Psoas muscle (tissue), 8 donors: ENCODE measurements at regions of chr17 and their contacts with region 1.

Region 1: DNA sequence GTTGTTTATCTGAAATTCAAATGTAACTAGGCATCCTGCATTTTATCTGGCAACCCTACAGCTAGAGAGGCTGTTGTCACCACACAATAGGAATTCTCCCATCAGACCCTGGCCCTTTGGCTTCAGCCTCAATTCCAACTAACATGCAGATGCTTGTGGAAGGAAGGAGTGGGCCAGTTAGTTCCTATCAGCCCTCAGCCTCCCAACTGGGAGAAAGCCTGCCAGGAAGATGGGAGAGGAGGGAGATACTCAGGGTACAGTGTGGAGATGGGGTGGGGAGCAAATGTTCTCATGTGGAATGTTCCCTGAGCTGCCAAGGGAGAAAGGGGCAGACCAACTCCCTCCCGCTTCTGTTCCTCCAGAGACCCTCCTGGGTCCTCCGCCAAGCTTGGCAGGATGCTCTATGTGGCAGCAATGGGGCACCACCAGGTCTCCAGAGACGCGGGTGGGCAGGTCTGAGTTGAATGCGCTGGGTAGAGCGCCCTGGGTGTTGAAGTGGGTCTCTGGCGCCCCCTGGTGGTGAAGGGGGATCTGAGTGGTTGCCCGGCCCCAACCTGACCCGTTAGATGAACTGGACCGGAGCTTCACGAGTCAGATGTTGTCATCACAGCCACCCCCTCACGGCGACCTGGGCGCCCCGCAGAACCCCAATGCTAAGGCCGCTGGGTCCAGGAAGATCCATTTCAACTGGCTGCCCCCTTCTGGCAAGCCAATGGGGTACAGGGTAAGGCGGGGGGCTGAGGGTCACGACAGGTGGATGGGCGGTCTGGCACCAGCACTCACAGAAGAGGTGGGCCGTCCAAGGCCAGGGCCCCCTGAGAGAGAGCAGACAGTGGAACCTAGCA is 15.2 kb downstream of the GALK1 start:
- DNase-seq: peak; percentile 90 to 95
- ATAC-seq: peak; percentile 74 to 84 (median 76)
- H3K4me3 ChIP-seq: no peak overlapping the region
- H3K27ac ChIP-seq: no peak overlapping the region
- H3K4me1 ChIP-seq: peaks cover 13% of the 10 kb centered on the region
- H3K27me3 ChIP-seq: no peaks in the 10 kb centered on the region
- CTCF ChIP-seq: peak; percentile 97

Region 2: DNA sequence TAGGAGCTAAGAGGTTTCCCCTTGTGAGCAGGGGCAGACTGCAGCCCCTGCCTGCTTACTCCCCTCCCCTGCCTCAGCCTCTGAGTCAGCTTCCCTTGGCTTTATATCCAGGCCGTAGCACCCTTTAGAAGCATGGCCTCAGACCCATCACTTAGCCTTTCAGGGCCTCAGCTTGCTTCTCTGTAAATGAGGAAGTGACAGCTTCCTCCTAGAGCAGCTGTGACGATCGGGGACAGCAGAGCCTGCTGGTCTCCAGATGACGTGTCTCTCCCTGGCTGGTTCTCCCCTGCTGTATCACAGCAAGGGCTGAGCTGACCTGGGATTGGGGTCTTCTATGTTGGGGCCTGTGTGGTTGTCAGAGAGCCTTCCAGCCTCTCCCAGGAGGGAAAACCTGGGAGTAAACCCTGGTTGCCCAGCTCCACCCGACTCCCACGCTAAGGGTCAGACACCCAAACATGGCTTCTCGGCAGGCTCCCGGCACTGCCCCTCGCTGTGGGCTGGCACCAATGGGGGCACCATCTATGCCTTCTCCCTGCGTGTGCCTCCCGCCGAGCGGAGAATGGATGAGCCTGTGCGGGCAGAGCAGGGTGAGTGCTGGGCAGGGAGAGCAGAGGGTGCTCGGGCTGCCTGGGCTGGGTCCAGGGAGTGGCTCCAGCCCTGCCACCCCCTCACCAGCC is 178.4 kb before region 1 on chr17:
- intact Hi-C with region 1: no loop called
- DNase-seq: no peak
- ATAC-seq: peak in 3 of 4 donors; percentile 23 to 57 (median 40)
- H3K4me3 ChIP-seq: no peak overlapping the region
- H3K27ac ChIP-seq: no peak overlapping the region
- H3K4me1 ChIP-seq: no peaks in the 10 kb centered on the region
- H3K27me3 ChIP-seq: no peaks in the 10 kb centered on the region
- CTCF ChIP-seq: no peak

Region 3: DNA sequence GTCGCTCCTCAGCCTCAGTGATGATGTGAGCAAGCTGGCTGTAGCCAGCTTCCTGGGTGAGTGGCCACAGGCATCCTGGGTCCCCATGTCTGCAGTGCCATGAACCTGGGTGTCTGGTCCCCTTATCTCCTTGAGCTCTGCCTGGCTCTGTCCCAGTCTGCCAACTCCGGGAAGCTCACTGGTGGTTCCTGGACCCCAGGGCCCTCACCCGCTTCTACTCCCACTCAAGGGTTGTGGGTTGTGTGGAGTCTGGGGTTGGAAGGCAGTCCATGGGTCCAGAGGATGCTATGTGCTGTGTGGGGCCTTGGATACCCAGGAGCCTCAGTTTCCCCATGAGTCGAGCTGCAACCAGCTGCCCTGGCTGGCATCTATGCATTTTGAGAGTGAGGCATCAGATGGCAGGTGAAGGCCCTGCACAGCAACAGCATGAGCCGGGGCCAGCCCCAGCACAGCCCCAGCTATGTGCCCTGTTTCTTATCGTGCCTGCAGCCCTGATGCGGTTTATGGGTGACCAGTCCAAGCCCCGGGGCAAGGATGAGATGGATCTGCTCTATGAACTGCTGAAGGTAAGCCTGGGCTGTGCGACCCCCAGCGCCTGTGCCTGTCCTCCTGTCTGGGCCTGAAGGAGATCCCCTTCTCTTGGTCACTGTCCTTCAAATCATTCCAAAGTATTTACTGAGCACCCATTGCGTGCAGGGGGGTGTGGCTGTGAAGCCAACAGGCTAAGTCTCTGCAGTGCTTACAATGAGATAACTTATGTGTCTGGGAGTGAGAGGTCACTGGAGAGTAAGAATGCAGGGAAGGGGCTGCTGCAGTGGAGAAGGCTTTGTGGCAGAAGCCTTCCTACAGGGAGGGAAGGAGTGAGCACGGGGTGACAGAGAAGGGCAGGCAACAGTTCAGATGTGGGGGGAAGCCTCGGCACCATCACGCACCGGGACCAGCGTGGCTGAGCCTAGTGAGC is 128.0 kb before region 1 on chr17:
- intact Hi-C with region 1: no loop called
- DNase-seq: peak in 1 of 2 donors; percentile 11
- ATAC-seq: no peak
- H3K4me3 ChIP-seq: no peak overlapping the region
- H3K27ac ChIP-seq: no peak overlapping the region
- H3K4me1 ChIP-seq: peaks cover 7% of the 10 kb centered on the region
- H3K27me3 ChIP-seq: no peaks in the 10 kb centered on the region
- CTCF ChIP-seq: no peak

Region 4: DNA sequence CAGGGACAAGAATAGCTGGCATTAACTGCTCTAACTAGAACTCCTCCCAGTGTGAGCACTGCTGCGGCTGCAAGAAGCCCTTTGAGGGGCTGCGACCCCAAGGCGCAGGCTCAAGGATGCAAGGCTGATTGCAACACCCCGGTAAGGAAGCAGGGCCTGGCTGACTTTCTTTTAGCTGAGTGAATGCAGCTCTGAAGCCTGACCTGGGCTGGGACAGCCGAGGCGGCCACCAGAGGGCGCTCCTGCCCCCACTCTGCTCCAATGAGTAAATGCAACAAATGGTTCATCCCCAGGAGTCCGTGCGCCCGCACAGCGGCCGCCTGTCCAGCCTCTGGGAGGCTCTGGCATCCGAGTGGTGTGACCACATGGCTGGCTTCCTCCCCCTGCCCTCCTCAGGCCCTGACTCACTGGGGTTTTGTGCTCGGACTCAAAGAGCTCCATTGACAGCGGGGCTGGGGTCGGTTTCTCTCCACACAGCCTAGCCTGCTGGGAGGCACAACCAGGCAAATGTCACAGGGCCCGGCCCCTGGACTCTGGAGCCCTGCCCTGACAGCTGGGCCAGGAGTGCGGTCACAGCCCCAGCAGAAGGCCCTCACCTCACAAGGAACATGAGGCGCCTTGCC is 116.8 kb before region 1 on chr17 and contains the start of gene SMIM5:
- intact Hi-C with region 1: loop called (anchors 1 to 2 kb)
- DNase-seq: peak; percentile 90 to 95
- ATAC-seq: peak; percentile 75 to 88 (median 78)
- H3K4me3 ChIP-seq: peak within 1 kb of the TSS; percentile 33
- H3K27ac ChIP-seq: peak within 1 kb of the TSS; percentile 78
- H3K4me1 ChIP-seq: peaks cover 46% of the 10 kb centered on the region
- H3K27me3 ChIP-seq: no peaks in the 10 kb centered on the region
- CTCF ChIP-seq: peak; percentile 97
- total RNA-seq, gene SMIM5: 0.11 to 0.28 (median 0.17) TPM in 3 of 4 donors, not detected in the other

Region 5: GRCh38 chr17:75673487-75673886 is 76.3 kb before region 1 on chr17:
- intact Hi-C with region 1: loop called (anchors 2 to 5 kb)
- DNase-seq: no peak
- ATAC-seq: no peak
- H3K4me3 ChIP-seq: no peak overlapping the region
- H3K27ac ChIP-seq: no peak overlapping the region
- H3K4me1 ChIP-seq: peaks cover 19% of the 10 kb centered on the region
- H3K27me3 ChIP-seq: no peaks in the 10 kb centered on the region
- CTCF ChIP-seq: no peak

Region 6: GRCh38 chr17:75679706-75680442 is 69.9 kb before region 1 on chr17:
- intact Hi-C with region 1: loop called in 1 of 2 experiments (anchors 2 kb)
- DNase-seq: no peak
- ATAC-seq: peak in 2 of 4 donors; percentile 55 to 60
- H3K4me3 ChIP-seq: no peak overlapping the region
- H3K27ac ChIP-seq: peak overlapping the region; percentile 23
- H3K4me1 ChIP-seq: peaks cover 33% of the 10 kb centered on the region
- H3K27me3 ChIP-seq: no peaks in the 10 kb centered on the region
- CTCF ChIP-seq: peak; percentile 21

Region 7: GRCh38 chr17:75707131-75707571 is 42.6 kb before region 1 on chr17:
- intact Hi-C with region 1: no loop called
- DNase-seq: peak in 1 of 2 donors; percentile 39
- ATAC-seq: peak in 3 of 4 donors; percentile 35 to 53 (median 47)
- H3K4me3 ChIP-seq: no peak overlapping the region
- H3K27ac ChIP-seq: no peak overlapping the region
- H3K4me1 ChIP-seq: no peaks in the 10 kb centered on the region
- H3K27me3 ChIP-seq: peaks cover 0 to 3% (median 0%) of the 10 kb centered on the region in 3 donors
- CTCF ChIP-seq: no peak